Natural killer cell (primary cell): ENCODE measurements at regions of chr2 and their contacts with region 1.

Region 1: DNA sequence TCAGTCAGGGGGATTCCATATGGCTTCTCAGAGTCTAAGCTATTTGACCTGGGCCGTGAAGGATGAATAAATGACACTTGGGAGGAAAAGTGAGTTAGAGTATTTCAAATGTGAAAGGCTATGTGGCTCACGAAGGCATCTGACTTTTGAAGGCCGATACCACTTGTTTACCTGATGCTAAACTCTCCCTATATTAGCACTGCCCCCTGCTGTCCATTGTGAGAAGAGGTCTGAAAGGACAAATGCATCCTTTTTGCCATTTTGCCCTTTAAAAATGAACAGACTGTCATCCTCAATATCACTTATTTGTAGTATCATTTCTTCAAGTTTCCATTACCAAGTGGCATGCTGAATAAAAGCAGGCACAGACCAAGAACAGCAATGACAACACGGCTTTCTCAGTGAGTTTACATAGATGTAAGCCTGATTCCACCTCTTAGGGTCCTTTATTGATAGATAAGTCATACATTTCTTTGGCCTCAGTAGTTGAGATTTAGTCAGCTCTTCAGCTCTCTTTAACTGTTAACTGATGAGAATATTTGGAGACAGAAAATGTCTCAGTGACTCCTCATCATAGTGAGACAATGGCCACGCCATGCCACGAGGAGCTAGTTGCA is 40.1 kb downstream of the DOCK10 start:
- DNase-seq: peak; percentile 40 to 90
- ATAC-seq: peak; percentile 81 to 89 (median 82)
- H3K4me3 ChIP-seq: no peak overlapping the region
- H3K4me3 Mint-ChIP-seq: peak overlapping the region; percentile 53
- H3K27ac ChIP-seq: peak overlapping the region; percentile 45
- H3K27ac Mint-ChIP-seq: peak overlapping the region; percentile 74 to 89
- H3K4me1 ChIP-seq: peaks cover 22% of the 10 kb centered on the region
- H3K4me1 Mint-ChIP-seq: peaks cover 70 to 78% of the 10 kb centered on the region in 2 donors
- H3K27me3 ChIP-seq: no peaks in the 10 kb centered on the region
- H3K27me3 Mint-ChIP-seq: no peaks in the 10 kb centered on the region
- CTCF ChIP-seq: peak; percentile 78

Region 2: GRCh38 chr2:224887141-224887540 is 115.0 kb before region 1 on chr2:
- intact Hi-C with region 1: loop called (anchors 1 kb)
- DNase-seq: peak in 1 of 2 donors; percentile 38
- ATAC-seq: peak; percentile 39 to 65 (median 63)
- H3K4me3 ChIP-seq: no peak overlapping the region
- H3K4me3 Mint-ChIP-seq: no peak overlapping the region
- H3K27ac ChIP-seq: no peak overlapping the region
- H3K27ac Mint-ChIP-seq: no peak overlapping the region
- H3K4me1 ChIP-seq: no peaks in the 10 kb centered on the region
- H3K4me1 Mint-ChIP-seq: peaks cover 32 to 36% of the 10 kb centered on the region in 2 donors
- H3K27me3 ChIP-seq: no peaks in the 10 kb centered on the region
- H3K27me3 Mint-ChIP-seq: no peaks in the 10 kb centered on the region
- CTCF ChIP-seq: no peak

Region 3: DNA sequence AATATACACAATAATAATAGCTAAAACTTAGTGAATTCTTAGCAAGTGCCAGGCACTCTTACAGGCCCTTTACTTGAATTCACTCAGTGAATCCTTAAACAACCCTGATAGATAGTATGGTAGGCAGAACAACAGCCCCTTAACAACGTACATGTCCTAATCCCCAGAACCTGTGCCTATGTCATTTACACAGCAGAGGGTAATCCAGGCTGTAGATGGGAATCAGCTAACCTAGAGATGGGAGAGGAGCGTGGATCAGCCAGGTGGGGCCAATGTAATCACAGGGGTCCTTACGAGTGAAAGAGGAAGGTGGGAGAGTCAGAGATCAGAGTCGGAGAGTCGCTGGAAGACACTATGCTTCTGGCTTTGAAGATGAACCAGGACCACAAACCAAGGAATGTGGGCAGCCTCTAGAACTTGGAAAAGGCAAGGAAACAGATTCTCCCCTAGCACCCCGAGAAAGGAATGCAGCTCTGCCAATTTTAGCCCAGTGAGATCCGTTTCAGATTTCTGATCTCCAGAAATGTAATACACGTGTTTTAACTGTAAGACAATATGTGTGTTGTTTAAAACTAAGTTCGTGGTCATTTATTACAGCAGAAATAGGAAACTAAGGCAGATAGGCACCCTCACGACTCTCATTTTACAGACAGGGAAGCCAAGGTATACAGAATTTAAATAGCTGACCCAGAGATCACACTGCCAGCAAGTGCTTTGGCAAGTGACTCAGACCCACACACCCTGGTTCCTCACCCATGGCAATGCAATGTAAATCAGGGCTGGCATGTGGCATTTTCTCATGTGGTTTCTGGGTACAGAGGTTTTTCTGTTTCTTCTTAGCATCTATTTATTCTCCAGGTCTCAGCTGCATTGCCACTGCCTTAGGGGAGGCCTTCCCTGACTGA is 28.8 kb before region 1 on chr2:
- intact Hi-C with region 1: loop called (anchors 2 kb)
- DNase-seq: peak in 1 of 2 donors; percentile 47
- ATAC-seq: peak; percentile 66 to 76 (median 75)
- H3K4me3 ChIP-seq: no peak overlapping the region
- H3K4me3 Mint-ChIP-seq: peak overlapping the region; percentile 41
- H3K27ac ChIP-seq: peak overlapping the region; percentile 52
- H3K27ac Mint-ChIP-seq: peak overlapping the region; percentile 70 to 84
- H3K4me1 ChIP-seq: peaks cover 49% of the 10 kb centered on the region
- H3K4me1 Mint-ChIP-seq: peaks cover 82 to 83% of the 10 kb centered on the region in 2 donors
- H3K27me3 ChIP-seq: no peaks in the 10 kb centered on the region
- H3K27me3 Mint-ChIP-seq: no peaks in the 10 kb centered on the region
- CTCF ChIP-seq: no peak